ENCODE measurements at regions of chr12 and their contacts with region 1.

Region 1: DNA sequence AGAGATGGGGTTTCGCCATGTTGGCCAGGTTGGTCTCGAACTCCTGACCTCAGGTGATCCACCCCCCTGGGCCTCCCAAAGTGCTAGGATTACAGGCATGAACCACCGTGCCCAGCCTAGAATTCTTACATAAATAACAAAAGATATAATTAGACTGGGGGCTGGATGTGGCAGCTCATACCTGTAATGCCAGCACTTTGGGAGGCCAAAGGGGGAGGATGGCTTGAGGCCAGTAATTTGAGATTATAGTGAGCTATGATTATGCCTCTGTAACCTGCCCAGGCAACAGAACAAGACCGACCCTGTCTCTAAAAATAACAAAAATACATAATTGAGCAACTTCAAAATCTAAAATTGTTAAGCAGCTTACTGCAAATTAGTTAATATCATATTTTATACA is 130.4 kb downstream of the ARID2 start:
- DNase-seq: no peak
- H3K4me3 ChIP-seq: no peak overlapping the region
- H3K27ac ChIP-seq: no peak overlapping the region
- H3K4me1 ChIP-seq: peaks cover 0 to 34% (median 13%) of the 10 kb centered on the region in 4 donors
- H3K27me3 ChIP-seq: no peaks in the 10 kb centered on the region
- CTCF ChIP-seq: no peak
- EP300 ChIP-seq: no peak
- POLR2A ChIP-seq: no peak

Region 2: DNA sequence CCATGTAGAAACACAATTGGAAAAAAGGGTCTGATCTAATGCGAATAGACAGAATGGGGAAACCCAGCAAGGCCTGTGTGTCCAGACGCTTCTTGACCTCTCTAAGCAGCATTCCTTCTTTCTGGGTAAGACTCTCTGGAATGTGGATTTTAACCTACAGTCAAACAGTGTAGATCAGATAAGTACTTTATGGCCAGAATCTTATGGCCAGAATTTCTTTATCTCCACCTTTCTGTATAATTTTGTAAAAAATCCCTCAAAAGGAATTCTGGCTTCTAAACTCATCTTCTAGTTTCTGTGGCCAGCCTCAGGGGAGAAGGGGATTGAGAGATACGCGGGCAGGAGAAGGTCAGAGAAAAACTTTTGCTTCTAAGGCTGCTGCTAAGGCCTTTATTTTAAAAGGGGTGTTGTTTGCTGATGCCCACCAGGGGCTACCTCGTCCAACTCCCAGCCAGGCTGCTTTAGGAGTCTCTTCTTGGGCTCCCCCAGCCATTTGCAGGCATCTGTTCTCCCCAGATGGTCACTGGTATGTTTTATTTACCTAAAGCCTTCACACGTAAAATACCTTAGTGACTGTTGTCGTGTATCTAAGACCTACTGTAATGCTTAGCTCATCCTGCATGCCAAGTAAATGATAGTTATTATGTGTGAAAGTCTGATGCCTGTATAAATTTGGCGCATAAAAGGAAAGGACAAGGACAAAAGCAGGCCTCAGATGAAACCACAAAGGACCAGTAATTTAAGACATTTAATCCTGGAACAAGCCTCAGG is 575.6 kb before region 1 on chr12:
- intact Hi-C with region 1: no loop called
- DNase-seq: no peak
- H3K4me3 ChIP-seq: no peak overlapping the region
- H3K27ac ChIP-seq: peak overlapping the region; percentile 31 to 75 (median 69)
- H3K4me1 ChIP-seq: peaks cover 0 to 42% (median 27%) of the 10 kb centered on the region in 4 donors
- H3K27me3 ChIP-seq: no peaks in the 10 kb centered on the region
- CTCF ChIP-seq: no peak
- EP300 ChIP-seq: no peak
- POLR2A ChIP-seq: no peak

Region 3: GRCh38 chr12:45789025-45789424 is 70.9 kb before region 1 on chr12:
- intact Hi-C with region 1: loop called (anchors 10 kb)
- DNase-seq: no peak
- H3K4me3 ChIP-seq: no peak overlapping the region
- H3K27ac ChIP-seq: no peak overlapping the region
- H3K4me1 ChIP-seq: peaks cover 0 to 33% (median 30%) of the 10 kb centered on the region in 4 donors
- H3K27me3 ChIP-seq: no peaks in the 10 kb centered on the region
- CTCF ChIP-seq: no peak
- EP300 ChIP-seq: no peak
- POLR2A ChIP-seq: no peak